ENCODE measurements at regions of chr11 and their contacts with region 1.

Region 1: GRCh38 chr11:75706260-75706729 is 11.3 kb upstream of the MOGAT2 start:
- DNase-seq: no peak
- ATAC-seq: peak; percentile 99
- H3K4me3 ChIP-seq: no peak overlapping the region
- H3K27ac ChIP-seq: no peak overlapping the region
- H3K4me1 ChIP-seq: no peaks in the 10 kb centered on the region
- H3K27me3 ChIP-seq: no peaks in the 10 kb centered on the region
- CTCF ChIP-seq: peak; percentile 84 to 96 (median 94)
- EP300 ChIP-seq: no peak
- POLR2A ChIP-seq: no peak
- RAD21 ChIP-seq: peak; percentile 53

Region 2: GRCh38 chr11:75445315-75445953 is 260.9 kb before region 1 on chr11:
- CTCF ChIA-PET with region 1: no interaction called
- POLR2A ChIA-PET with region 1: no interaction called
- RAD21 ChIA-PET with region 1: no interaction called
- SMC1A ChIA-PET with region 1: no interaction called
- in situ Hi-C with region 1: no loop called
- intact Hi-C with region 1: loop called (anchors 10 kb)
- DNase-seq: peak; percentile 19
- ATAC-seq: peak; percentile 91
- H3K4me3 ChIP-seq: no peak overlapping the region
- H3K27ac ChIP-seq: no peak overlapping the region
- H3K4me1 ChIP-seq: no peaks in the 10 kb centered on the region
- H3K27me3 ChIP-seq: no peaks in the 10 kb centered on the region
- CTCF ChIP-seq: peak; percentile 93 to 99 (median 97); a peak in 5 of 6 replicates
- EP300 ChIP-seq: no peak
- POLR2A ChIP-seq: no peak
- RAD21 ChIP-seq: peak; percentile 100

Region 3: GRCh38 chr11:75547580-75548058 is 158.7 kb before region 1 on chr11:
- CTCF ChIA-PET with region 1: no interaction called
- POLR2A ChIA-PET with region 1: no interaction called
- RAD21 ChIA-PET with region 1: no interaction called
- SMC1A ChIA-PET with region 1: no interaction called
- in situ Hi-C with region 1: no loop called
- intact Hi-C with region 1: loop called (anchors 5 kb)
- DNase-seq: no peak
- ATAC-seq: peak; percentile 89
- H3K4me3 ChIP-seq: no peak overlapping the region
- H3K27ac ChIP-seq: no peak overlapping the region
- H3K4me1 ChIP-seq: no peaks in the 10 kb centered on the region
- H3K27me3 ChIP-seq: no peaks in the 10 kb centered on the region; a peak in 1 of 4 replicates
- CTCF ChIP-seq: peak; percentile 63 to 77 (median 70)
- EP300 ChIP-seq: no peak
- POLR2A ChIP-seq: no peak
- RAD21 ChIP-seq: peak; percentile 62

Region 4: GRCh38 chr11:75717608-75718418 is 11.5 kb after region 1 on chr11 and contains the start of gene MOGAT2:
- CTCF ChIA-PET with region 1: interaction called, 18 read pairs
- POLR2A ChIA-PET with region 1: interaction called, 5 read pairs
- RAD21 ChIA-PET with region 1: interaction called, 3 read pairs
- SMC1A ChIA-PET with region 1: interaction called, 4 read pairs
- in situ Hi-C with region 1: no loop called
- intact Hi-C with region 1: no loop called
- DNase-seq: no peak
- ATAC-seq: no peak
- H3K4me3 ChIP-seq: no peak within 1 kb of the TSS
- H3K27ac ChIP-seq: no peak within 1 kb of the TSS
- H3K4me1 ChIP-seq: peaks cover 11% of the 10 kb centered on the region
- H3K27me3 ChIP-seq: no peaks in the 10 kb centered on the region
- CTCF ChIP-seq: no peak
- EP300 ChIP-seq: no peak
- POLR2A ChIP-seq: no peak
- RAD21 ChIP-seq: no peak
- polyA plus RNA-seq, gene MOGAT2: 0.16 to 0.21 TPM

Region 5: DNA sequence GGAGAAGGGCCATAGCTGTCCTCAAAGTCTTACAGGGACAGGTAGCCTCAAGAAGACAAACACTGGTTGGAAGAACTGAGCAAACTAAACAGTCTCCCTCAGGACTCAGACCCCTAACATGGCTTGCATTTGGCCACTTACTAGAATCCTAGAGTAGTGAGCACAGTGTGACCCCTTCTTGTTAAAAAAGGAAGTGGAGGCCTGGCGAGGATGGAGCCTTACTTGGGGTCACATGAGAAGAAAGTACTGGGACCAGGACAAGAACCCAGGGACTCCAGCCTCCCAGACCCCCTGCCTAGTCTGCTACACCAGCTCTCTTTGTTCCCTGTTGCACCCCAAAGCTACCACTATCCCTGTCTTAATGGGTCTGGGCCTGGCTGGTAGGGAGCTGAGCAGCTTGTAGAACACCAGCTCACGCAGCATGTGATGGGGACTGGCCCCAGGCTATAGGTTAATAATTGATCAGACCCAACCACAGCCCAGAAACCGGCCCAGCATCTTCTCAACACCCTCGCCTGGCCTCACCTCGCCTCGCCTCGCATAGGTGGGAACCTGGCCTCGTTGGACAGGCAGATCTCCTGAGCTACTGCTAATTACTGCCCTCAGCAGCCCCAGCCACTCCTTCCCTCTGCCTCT is 79.9 kb after region 1 on chr11:
- CTCF ChIA-PET with region 1: interaction called, 21 read pairs
- POLR2A ChIA-PET with region 1: no interaction called
- RAD21 ChIA-PET with region 1: interaction called, 4 read pairs
- SMC1A ChIA-PET with region 1: no interaction called
- in situ Hi-C with region 1: no loop called
- intact Hi-C with region 1: no loop called
- DNase-seq: no peak
- ATAC-seq: peak; percentile 96
- H3K4me3 ChIP-seq: no peak overlapping the region
- H3K27ac ChIP-seq: no peak overlapping the region
- H3K4me1 ChIP-seq: no peaks in the 10 kb centered on the region
- H3K27me3 ChIP-seq: no peaks in the 10 kb centered on the region
- CTCF ChIP-seq: no peak
- EP300 ChIP-seq: no peak
- POLR2A ChIP-seq: no peak
- RAD21 ChIP-seq: no peak

Measured in GM12878 (cell line).